ENCODE measurements at regions of chr2 and their contacts with region 1.

Region 1: GRCh38 chr2:20015472-20016083 is 3.1 kb upstream of the MATN3 start:
- DNase-seq: no peak
- ATAC-seq: peak; percentile 56
- H3K4me3 ChIP-seq: no peak overlapping the region
- H3K27ac ChIP-seq: no peak overlapping the region
- H3K4me1 ChIP-seq: peaks cover 12% of the 10 kb centered on the region
- H3K27me3 ChIP-seq: peaks cover 10% of the 10 kb centered on the region
- CTCF ChIP-seq: peak; percentile 67

Region 2: GRCh38 chr2:20097879-20098714 is 82.5 kb after region 1 on chr2:
- intact Hi-C with region 1: loop called (anchors 10 kb)
- DNase-seq: peak; percentile 92
- ATAC-seq: peak; percentile 96
- H3K4me3 ChIP-seq: no peak overlapping the region
- H3K27ac ChIP-seq: no peak overlapping the region
- H3K4me1 ChIP-seq: no peaks in the 10 kb centered on the region
- H3K27me3 ChIP-seq: no peaks in the 10 kb centered on the region
- CTCF ChIP-seq: peak; percentile 94

Region 3: DNA sequence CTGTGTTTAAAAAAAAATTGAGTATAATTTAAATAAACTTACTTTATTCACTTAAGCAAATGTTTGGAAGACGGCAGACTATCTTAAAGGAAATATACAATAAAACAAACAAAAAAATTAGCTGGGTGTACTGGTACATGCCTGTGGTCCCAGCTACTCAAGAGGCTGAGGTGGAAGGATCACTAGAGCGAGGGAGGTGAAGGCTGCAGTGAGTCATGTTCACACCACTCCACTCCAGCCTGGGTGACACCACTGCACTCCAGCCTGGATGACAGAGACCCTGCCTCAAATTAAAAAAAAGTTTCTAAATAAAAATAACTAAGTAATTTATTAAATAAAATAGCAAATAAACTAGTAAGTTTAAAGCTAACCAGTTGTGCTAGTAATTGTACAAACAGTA is 327.6 kb after region 1 on chr2:
- intact Hi-C with region 1: no loop called
- DNase-seq: no peak
- ATAC-seq: no peak
- H3K4me3 ChIP-seq: no peak overlapping the region
- H3K27ac ChIP-seq: no peak overlapping the region
- H3K4me1 ChIP-seq: peaks cover 54% of the 10 kb centered on the region
- H3K27me3 ChIP-seq: no peaks in the 10 kb centered on the region
- CTCF ChIP-seq: no peak